ENCODE measurements at regions of chr6 and their contacts with region 1.

Region 1: DNA sequence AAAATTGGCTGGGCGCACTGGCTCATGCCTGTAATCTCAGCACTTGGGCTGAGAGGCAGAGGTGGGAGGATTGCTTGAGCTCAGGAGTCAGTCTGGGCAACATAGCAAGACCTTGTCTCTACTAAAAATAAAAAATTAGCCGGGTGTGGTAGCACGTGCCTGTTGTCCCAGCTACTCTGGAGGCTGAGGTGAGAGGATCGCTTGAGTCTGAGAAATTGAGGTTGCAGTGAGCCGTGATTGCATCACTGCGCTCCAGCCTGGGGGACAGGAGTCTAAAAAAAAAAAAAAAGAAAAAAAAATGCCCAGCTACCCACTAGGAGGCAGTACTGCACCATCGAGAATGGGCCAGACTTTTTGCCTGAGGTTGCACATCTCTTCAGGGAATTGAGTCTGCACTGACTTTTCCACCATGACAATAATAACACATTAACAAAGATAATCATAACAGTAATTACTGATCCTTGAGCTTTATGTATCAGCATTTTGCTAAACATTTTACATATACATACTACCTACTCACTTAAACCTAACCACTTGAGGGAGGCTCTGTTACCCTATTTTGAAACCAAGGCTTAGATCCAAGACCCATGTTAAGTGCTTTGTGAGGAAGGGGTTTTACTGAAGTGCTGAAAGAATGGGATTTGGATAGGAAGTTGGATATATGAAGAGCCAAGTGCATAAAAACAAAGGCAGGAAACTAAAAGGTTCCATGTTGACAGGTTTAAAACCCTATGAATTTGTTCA is 21.0 kb downstream of the SRSF3 start:
- DNase-seq: peak; percentile 49
- H3K27ac ChIP-seq: peak overlapping the region; percentile 50
- CTCF ChIP-seq: peak; percentile 68

Region 2: GRCh38 chr6:36459501-36459900 is 155.7 kb before region 1 on chr6:
- CTCF ChIA-PET with region 1: no interaction called
- POLR2A ChIA-PET with region 1: no interaction called
- DNase-seq: no peak
- H3K27ac ChIP-seq: no peak overlapping the region
- CTCF ChIP-seq: no peak

Region 3: GRCh38 chr6:36724514-36725390 is 109.6 kb after region 1 on chr6:
- CTCF ChIA-PET with region 1: interaction called, 10 read pairs
- POLR2A ChIA-PET with region 1: no interaction called
- DNase-seq: peak; percentile 84
- H3K27ac ChIP-seq: 0 out of 2 replicates have a peak overlapping the region, but pooled peaks have one; percentile 2
- CTCF ChIP-seq: peak; percentile 79

Region 4: DNA sequence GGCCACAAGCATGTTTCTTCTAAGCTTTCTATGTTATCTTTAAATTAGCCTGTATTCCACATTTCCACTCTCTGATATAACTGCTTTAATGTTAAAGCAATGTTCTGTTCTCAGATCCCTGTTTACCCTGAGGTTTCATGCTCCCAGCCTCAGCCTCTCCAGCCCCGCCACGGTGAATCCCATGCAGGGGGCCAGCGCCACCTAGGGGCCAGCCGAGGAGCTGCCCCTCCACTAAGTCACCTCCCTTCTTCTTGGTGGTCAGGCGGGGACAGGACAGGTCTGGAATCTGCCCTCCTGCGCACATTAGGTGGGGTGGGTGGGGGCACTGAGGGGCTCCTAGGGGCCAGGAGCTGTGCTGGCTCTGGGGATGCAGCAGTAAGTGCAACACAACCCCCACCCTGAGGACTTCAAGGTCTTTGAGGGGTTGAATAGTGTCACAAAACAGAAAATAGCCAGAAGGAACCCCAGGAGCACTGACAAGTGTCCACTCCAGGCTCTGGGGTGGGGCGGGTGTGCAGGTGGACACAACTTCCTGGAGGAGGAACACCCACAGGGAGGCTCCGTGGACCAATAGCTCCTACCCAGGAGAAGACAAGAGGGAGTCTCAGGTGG is 144.1 kb after region 1 on chr6:
- CTCF ChIA-PET with region 1: interaction called, 13 read pairs
- POLR2A ChIA-PET with region 1: interaction called, 5 read pairs
- DNase-seq: peak; percentile 88
- H3K27ac ChIP-seq: no peak overlapping the region
- CTCF ChIP-seq: peak; percentile 98

Region 5: DNA sequence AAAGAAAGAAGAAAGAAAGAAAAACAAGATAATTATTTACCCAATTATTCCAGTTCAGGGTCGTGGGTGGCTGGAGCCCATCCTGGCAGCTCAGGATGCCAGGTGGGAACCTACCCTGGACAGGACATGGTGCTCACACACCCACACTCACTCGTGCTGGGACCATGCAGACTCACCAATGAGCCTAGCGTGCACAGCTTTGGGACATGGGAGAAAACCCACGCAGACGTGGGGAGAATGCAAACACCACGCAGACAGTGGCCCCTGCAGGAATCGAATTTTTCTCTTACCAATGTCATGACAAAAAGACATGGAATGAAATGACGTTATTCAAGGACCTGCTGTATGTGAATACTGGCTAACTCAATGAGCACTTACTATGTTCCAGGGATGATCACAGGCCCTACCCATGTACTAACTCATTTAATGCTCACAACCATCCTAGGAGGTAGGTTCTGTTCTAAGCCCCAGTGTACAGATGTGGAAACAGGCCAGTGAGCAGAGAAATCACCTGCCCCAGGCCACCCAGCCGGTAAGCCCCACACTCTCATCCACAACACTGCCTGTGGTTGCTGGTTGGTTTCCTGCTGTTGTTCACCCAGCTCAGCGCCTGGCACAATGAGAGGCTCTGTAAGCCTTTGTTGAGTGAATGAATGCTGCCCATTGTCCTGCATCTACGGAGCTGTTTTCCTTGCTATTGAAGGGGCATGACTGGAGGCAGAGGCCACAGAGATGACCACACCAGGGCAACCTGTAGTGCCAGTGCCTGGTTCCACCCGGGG is 332.6 kb after region 1 on chr6:
- CTCF ChIA-PET with region 1: no interaction called
- POLR2A ChIA-PET with region 1: no interaction called
- DNase-seq: no peak
- H3K27ac ChIP-seq: no peak overlapping the region
- CTCF ChIP-seq: no peak